Endothelial cell of umbilical vein (primary cell): ENCODE measurements at regions of chr10 and their contacts with region 1.

Region 1: GRCh38 chr10:97025613-97026242 is 160.0 kb downstream of the SLIT1 start:
- DNase-seq: peak; percentile 34
- H3K4me3 ChIP-seq: no peak overlapping the region
- H3K27ac ChIP-seq: no peak overlapping the region
- H3K4me1 ChIP-seq: peaks cover 18% of the 10 kb centered on the region
- H3K27me3 ChIP-seq: no peaks in the 10 kb centered on the region
- CTCF ChIP-seq: peak; percentile 58 to 63
- POLR2A ChIP-seq: no peak

Region 2: DNA sequence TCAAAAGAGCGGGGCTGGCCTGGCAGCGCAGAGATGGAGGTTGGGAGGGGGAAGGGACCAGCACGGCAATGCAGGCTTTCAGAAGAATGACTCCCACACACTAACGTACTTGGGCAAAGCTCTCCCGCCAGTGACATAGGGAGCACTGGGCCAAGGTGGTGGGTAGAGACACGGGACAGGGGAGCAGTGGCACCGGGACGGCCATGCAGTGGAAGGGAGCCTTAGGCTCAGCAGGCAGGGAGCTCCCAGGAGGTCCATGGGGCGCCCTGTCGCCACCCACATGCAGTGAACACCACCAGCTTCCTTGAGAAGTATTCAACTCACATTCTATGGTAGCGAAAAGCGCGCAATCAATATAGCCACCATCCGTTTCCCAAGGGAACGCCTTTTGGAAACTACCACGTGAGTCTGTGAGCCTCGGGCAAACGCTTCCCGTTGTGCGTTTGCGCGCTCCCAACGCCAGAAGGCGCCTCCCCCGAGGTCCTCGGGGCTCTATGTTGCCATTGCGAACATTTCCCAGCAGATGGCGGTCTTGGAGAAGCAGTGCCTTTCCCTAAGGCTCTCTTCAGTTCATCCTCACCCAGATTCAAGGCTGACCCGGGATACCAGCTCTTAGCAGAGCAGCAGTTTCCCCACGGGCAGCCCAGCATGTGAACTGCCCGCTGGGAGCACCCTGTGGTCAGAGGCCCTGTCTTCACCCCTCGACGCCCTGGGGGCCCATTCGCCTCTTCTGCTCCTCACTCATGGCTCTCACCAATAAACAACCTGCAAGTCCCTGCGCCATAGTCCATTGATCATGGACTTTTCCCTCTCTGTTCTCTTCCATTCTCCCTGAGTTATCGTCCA is 650.5 kb before region 1 on chr10:
- CTCF ChIA-PET with region 1: interaction called, 10 read pairs
- POLR2A ChIA-PET with region 1: no interaction called
- dilution Hi-C with region 1: no loop called
- intact Hi-C with region 1: no loop called
- DNase-seq: peak; percentile 90
- H3K4me3 ChIP-seq: peak overlapping the region in 2 of 3 experiments; percentile 47 to 48
- H3K27ac ChIP-seq: no peak overlapping the region
- H3K4me1 ChIP-seq: no peaks in the 10 kb centered on the region
- H3K27me3 ChIP-seq: peaks cover 0 to 2% of the 10 kb centered on the region in 2 experiments
- CTCF ChIP-seq: peak; percentile 96 to 98
- POLR2A ChIP-seq: no peak

Region 3: DNA sequence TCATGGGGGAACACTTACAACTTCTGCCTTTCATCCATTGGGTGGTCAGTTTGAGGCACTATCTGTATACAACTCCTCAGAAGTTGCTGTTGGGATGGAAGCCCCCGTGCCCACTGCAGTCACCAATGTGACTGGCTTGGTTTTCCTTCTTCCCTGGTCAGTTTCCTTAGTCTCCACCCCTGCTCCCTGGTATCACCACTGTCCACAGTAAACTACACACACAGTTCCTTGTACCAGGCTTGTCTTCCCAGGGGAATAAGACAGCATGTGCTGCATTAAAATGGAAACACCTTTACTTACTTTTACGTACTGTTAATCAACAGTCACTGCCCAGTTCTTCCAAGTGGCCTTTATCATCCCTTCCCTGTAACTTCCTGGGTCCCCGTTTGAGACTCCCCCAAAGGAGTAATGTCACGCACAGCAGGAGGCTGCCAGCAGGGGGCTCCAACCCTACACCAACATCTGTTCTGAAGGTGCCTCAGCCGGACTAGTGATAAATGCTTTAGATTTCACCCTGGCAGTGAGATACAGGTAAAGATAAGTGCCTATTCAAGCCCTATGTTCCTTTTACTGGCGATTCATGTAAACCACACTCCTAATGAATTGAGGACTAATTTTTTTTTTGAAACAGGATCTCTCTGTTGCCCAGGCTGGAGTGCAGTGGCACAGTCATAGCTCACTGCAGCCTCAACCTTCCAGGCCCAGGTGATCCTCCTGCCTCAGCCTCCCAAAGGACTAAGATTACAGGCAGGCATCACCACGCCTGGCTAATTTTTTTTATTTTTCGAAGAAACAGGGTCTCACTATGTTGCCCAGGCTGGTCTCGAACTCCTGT is 260.1 kb before region 1 on chr10:
- CTCF ChIA-PET with region 1: interaction called, 28 read pairs
- POLR2A ChIA-PET with region 1: no interaction called
- dilution Hi-C with region 1: no loop called
- intact Hi-C with region 1: loop called (anchors 1 kb)
- DNase-seq: peak; percentile 38
- H3K4me3 ChIP-seq: no peak overlapping the region
- H3K27ac ChIP-seq: no peak overlapping the region
- H3K4me1 ChIP-seq: no peaks in the 10 kb centered on the region
- H3K27me3 ChIP-seq: no peaks in the 10 kb centered on the region
- CTCF ChIP-seq: peak; percentile 79 to 89
- POLR2A ChIP-seq: no peak

Region 4: GRCh38 chr10:96831867-96832720 is 193.6 kb before region 1 on chr10 and contains the start of gene LCOR:
- CTCF ChIA-PET with region 1: interaction called, 10 read pairs
- POLR2A ChIA-PET with region 1: no interaction called
- dilution Hi-C with region 1: no loop called
- intact Hi-C with region 1: loop called (anchors 1 kb)
- DNase-seq: peak; percentile 85
- H3K4me3 ChIP-seq: peak within 1 kb of the TSS; percentile 81 to 99 (median 82)
- H3K27ac ChIP-seq: peak within 1 kb of the TSS; percentile 60
- H3K4me1 ChIP-seq: peaks cover 24% of the 10 kb centered on the region
- H3K27me3 ChIP-seq: no peaks in the 10 kb centered on the region
- CTCF ChIP-seq: no peak
- POLR2A ChIP-seq: peak; percentile 87
- total RNA-seq, gene LCOR: 32.9 and 39.0 TPM in 2 replicates

Region 5: DNA sequence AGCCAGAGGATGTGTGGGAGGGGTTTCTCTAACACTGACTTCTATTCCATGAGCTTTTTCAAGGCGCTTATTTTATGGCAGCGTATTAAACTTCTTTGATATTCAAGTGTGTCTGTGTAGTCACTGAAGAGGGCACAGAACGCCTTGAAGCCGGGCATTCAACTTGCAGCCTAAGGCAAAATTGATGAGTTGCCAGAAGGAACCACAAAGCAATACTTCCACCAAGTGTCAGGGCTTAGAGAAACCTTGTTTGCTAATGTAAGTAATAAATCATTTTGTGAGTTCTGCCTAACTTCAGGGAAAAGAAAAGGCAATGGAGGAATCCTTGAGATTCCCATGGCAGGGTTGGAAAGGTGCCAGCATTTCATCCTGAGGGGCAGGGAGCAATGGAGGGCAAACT is 29.9 kb before region 1 on chr10:
- CTCF ChIA-PET with region 1: interaction called, 19 read pairs
- POLR2A ChIA-PET with region 1: no interaction called
- dilution Hi-C with region 1: no loop called
- intact Hi-C with region 1: no loop called
- DNase-seq: peak; percentile 55
- H3K4me3 ChIP-seq: no peak overlapping the region
- H3K27ac ChIP-seq: no peak overlapping the region
- H3K4me1 ChIP-seq: no peaks in the 10 kb centered on the region
- H3K27me3 ChIP-seq: no peaks in the 10 kb centered on the region
- CTCF ChIP-seq: no peak
- POLR2A ChIP-seq: no peak

Region 6: DNA sequence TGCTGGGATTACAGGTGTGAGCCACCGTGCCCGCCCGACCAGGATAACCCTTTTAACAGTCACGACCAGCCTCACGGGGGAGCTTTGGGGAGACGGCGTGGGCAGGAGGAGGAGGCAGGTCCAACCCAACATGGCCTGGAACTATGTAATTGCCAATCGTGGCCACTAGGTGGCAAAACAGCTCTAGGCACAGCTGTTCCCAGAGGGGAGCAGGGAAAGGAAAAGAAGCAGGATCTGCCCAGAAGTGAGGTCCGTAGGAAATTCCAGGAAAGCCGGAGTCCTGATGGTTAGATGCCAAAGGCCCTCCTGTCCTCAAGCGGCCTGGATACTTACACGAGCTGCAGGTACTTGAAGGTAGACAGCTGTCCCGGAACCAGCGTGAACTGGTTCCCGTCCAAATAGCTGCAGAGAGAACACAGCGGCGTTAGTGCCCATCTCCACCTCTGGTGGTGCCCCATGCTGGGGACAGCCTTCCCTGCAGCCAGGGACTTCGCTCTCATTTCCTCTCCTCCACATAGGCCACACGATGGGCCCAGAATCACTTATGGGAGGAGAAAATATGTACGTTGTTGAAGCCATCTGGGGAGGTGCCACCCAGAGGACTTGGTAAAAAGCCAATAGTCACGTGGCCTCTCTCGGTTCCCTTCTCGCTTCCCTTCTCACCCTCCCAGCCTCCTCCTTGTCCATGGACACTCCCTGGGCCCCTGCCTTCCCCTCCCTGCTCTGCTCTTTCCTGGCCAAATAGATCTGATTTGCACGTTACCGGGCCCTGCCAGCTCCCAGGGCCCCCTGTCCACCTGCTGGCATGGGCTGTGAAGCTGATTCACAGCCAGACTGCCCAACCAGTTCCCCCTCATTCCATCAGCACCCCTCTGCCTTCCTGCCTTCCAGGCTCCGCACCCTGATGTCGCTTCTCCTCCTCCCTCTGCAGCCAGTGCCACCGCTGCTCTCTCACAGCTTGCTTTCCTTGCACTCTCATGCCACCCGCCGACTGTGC is 11.9 kb after region 1 on chr10:
- CTCF ChIA-PET with region 1: interaction called, 161 read pairs
- POLR2A ChIA-PET with region 1: interaction called, 4 read pairs
- dilution Hi-C with region 1: no loop called
- intact Hi-C with region 1: loop called (anchors 1 kb)
- DNase-seq: peak; percentile 82
- H3K4me3 ChIP-seq: peak overlapping the region in 2 of 3 experiments; percentile 20 to 35
- H3K27ac ChIP-seq: no peak overlapping the region
- H3K4me1 ChIP-seq: peaks cover 5% of the 10 kb centered on the region
- H3K27me3 ChIP-seq: peaks cover 0 to 2% of the 10 kb centered on the region in 2 experiments
- CTCF ChIP-seq: peak; percentile 81 to 87
- POLR2A ChIP-seq: no peak